SK-N-SH (cell line): ENCODE measurements at regions of chr6 and their contacts with region 1.

Region 1: DNA sequence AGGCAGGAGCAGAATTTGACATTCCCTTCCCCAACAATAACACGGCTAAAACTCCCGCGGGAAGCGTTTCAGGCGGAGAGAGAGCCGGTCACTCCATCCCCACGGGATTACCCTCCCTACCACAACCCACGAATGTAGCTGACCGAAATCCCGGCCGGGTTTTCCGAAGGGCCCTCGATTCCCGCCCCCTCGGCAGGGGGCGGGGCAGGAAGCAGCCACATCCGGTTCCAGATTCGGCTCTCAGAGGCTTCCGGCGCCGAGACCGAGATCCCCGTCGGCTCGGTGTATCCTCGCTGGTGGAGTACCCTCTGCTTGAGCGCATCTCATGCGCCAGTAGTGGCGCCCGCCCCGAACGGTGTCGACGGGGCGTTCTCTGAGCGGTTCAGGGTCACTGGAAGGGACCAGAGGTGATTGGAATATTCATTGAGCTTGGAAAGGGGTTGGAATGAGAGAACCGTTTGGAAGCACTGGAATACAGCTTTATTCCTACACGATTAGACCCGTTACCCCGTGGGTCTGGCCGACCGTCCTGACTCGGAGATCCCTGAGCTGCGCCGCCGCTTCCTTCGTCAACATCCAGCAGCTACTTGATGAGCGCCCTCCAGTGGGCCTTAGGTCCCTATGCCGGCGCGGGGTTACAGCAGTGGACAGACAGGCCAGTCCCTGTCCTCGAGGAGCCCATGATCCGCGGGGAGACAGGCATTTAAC is 649 bp upstream of the RGL2 start:
- DNase-seq: peak; percentile 91
- H3K4me3 ChIP-seq: peak overlapping the region; percentile 84 to 89
- H3K27ac ChIP-seq: peak overlapping the region; percentile 99
- H3K4me1 ChIP-seq: peaks cover 4 to 12% of the 10 kb centered on the region in 2 experiments; a peak in 1 of 4 replicates
- H3K27me3 ChIP-seq: no peaks in the 10 kb centered on the region
- CTCF ChIP-seq: peak; percentile 81
- EP300 ChIP-seq: no peak
- RAD21 ChIP-seq: peak; percentile 54

Region 2: DNA sequence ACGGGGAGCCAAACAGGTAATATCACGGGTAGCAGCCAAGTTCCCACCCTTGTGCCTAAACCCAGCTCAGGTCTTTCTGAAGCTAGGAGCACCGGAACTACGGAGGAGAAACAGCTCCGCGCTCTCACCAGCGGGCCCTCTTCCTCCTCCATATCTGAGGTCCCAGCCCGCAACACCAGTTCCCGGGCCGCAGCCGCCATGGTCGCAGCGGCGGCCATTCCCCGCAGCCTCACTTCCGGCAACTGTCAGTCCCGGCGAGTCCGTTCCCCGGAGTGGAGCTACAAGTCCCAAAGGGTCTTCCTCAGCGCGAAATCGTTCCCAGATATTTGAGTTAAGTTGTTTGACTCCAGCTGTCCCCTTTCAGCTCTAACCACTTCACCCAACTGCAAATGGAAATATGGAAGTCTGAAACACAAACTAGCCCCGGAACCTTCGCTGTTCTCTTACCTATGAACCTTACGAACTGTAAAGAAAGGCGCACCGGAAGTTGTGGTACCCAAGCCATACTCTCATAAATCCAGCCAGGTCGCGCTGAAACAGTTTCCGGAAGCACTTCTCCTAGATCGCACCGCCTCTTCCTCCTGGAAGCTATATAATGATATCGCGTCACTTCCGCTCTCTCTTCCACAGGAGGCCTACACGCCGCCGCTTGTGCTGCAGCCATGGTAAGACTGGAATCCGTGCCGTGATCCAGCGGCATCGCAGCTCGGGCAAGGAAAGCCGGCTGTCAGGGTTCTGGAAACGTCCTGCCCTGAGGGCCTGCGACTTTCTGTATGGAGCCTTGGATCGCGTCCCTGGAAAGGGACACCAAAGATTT is 27.7 kb before region 1 on chr6 and contains the starts of genes RPS18 and VPS52:
- CTCF ChIA-PET with region 1: interaction called, 30 read pairs
- POLR2A ChIA-PET with region 1: interaction called, 26 read pairs
- DNase-seq: peak; percentile 89
- H3K4me3 ChIP-seq: peak within 1 kb of the TSS; percentile 76 to 91
- H3K27ac ChIP-seq: peak within 1 kb of the TSS; percentile 88 to 99
- H3K4me1 ChIP-seq: peaks cover 30 to 39% of the 10 kb centered on the region in 2 experiments; a peak in 3 of 4 replicates
- H3K27me3 ChIP-seq: no peaks in the 10 kb centered on the region
- CTCF ChIP-seq: no peak
- EP300 ChIP-seq: no peak
- RAD21 ChIP-seq: no peak
- polyA plus RNA-seq, gene RPS18: 12,112 and 13,423 TPM in 2 replicates
- polyA plus RNA-seq, gene VPS52: 74.0 and 90.7 TPM in 2 replicates

Region 3: DNA sequence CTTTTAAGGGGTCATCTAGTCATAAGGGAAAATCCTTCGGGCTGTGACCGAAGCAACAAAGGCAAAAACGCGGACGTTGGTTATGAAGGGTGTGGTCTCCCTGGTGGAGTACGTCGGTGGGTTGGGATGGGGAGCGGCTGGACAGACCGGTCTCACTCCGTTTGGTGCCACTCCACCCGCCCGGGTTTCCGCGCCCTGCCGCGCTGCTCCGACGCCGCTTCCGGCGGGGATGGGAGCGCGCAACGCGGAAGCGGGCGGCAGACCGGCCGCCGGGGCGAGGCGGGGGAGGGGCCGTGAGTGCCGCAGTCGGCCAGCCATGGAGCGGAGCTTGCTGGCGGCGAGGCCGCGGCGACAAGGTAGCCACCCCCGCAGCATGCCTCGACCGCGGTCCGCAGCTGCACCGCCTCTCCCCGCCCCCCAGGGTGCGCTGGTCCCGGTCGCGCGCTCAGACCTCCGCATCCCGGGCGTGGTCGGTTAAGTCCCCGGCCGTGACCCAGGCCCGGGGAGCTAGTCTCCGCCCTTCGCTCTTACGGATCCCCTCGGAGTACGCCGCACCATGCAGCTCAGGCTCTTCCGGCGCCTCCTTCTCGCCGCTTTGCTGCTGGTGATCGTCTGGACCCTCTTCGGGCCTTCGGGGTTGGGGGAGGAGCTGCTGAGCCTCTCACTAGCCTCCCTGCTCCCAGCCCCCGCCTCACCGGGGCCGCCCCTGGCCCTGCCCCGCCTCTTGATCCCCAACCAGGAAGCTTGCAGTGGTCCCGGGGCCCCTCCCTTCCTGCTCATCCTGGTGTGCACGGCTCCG is 22.3 kb before region 1 on chr6 and contains the start of gene B3GALT4:
- CTCF ChIA-PET with region 1: interaction called, 30 read pairs
- POLR2A ChIA-PET with region 1: interaction called, 26 read pairs
- DNase-seq: peak; percentile 92
- H3K4me3 ChIP-seq: peak within 1 kb of the TSS; percentile 49 to 76
- H3K27ac ChIP-seq: peak within 1 kb of the TSS; percentile 67 to 86
- H3K4me1 ChIP-seq: peaks cover 31 to 36% of the 10 kb centered on the region in 2 experiments; a peak in 3 of 4 replicates
- H3K27me3 ChIP-seq: no peaks in the 10 kb centered on the region
- CTCF ChIP-seq: peak; percentile 51
- EP300 ChIP-seq: no peak
- RAD21 ChIP-seq: no peak
- polyA plus RNA-seq, gene B3GALT4: 0.55 and 0.56 TPM in 2 replicates

Region 4: GRCh38 chr6:33288921-33289748 is 10.3 kb before region 1 on chr6 and contains the starts of genes PFDN6 and WDR46:
- CTCF ChIA-PET with region 1: interaction called, 11 read pairs
- POLR2A ChIA-PET with region 1: interaction called, 30 read pairs
- DNase-seq: peak; percentile 88
- H3K4me3 ChIP-seq: peak within 1 kb of the TSS; percentile 78 to 96
- H3K27ac ChIP-seq: peak within 1 kb of the TSS; percentile 40 to 91; a peak in 3 of 4 replicates
- H3K4me1 ChIP-seq: peaks cover 5 to 23% of the 10 kb centered on the region in 2 experiments; a peak in 3 of 4 replicates
- H3K27me3 ChIP-seq: no peaks in the 10 kb centered on the region
- CTCF ChIP-seq: no peak
- EP300 ChIP-seq: no peak
- RAD21 ChIP-seq: no peak
- polyA plus RNA-seq, gene PFDN6: 182 and 213 TPM in 2 replicates
- polyA plus RNA-seq, gene WDR46: 153 and 172 TPM in 2 replicates

Region 5: GRCh38 chr6:33317669-33318425 is 18.5 kb after region 1 on chr6 and contains the start of gene ZBTB22:
- CTCF ChIA-PET with region 1: interaction called, 26 read pairs
- POLR2A ChIA-PET with region 1: interaction called, 14 read pairs
- DNase-seq: peak; percentile 92
- H3K4me3 ChIP-seq: peak within 1 kb of the TSS; percentile 56
- H3K27ac ChIP-seq: peak within 1 kb of the TSS; percentile 88 to 95
- H3K4me1 ChIP-seq: peaks cover 29 to 53% of the 10 kb centered on the region in 2 experiments; a peak in 3 of 4 replicates
- H3K27me3 ChIP-seq: no peaks in the 10 kb centered on the region
- CTCF ChIP-seq: no peak
- EP300 ChIP-seq: no peak
- RAD21 ChIP-seq: no peak
- polyA plus RNA-seq, gene ZBTB22: 19.5 and 22.2 TPM in 2 replicates